ENCODE measurements at regions of chr13 and their contacts with region 1.

Region 1: DNA sequence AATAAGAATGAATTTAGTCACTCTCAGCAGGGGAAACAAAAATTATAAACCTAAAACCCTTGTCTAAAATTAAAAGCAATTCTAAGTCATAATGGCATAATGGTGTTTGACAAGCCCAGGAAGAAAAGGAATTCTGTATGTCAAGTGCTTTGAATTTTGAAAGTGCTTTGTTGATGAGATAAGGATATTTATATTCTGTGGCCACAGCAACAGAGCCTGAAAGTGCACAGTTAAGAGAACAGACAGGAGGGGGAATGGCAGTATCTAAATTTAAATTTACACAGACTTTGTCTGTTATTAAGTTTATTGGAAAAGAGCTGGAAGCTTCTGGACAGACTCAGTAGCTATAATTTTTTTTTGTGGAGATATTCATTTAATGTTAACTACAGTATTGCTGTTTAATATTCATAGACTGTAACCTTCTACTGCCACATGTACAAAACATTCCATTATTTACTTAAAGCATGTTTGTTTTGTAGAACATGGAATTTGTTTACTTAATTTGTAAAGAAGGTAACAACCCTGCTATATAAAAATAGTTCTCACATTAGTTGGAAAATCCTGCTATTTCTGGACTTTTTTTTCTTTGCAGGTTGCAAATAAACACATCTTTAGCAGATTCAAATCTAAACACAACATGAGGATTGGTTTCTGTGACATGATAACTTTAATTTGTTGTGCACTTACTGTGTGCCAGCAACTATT is 70.0 kb downstream of the OLFM4 start:
- DNase-seq: no peak
- ATAC-seq: no peak
- H3K4me3 ChIP-seq: no peak overlapping the region
- H3K4me3 Mint-ChIP-seq: no peak overlapping the region
- H3K27ac ChIP-seq: no peak overlapping the region
- H3K27ac Mint-ChIP-seq: no peak overlapping the region
- H3K4me1 ChIP-seq: no peaks in the 10 kb centered on the region
- H3K4me1 Mint-ChIP-seq: no peaks in the 10 kb centered on the region
- H3K27me3 ChIP-seq: no peaks in the 10 kb centered on the region
- H3K27me3 Mint-ChIP-seq: peaks cover 2% of the 10 kb centered on the region
- CTCF ChIP-seq: no peak

Region 2: DNA sequence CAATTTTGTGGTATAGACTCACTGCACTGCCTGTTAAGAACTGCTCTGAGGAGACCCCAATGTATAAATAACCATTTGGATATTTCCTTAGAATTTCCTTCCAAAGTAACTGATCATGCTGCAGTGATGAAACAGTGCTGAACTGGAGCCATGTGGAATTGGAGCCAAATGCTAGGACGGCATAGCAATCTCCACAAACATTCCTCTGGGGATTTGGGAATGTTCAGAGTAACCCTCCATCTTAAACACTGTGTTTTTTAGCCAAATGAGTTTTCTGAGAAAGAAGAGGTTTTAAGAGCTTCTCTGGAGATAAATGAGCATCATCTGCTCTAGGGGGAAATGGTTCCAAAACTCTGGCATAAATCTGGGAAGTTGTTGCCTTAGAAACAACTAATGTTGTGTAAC is 28.2 kb after region 1 on chr13:
- CTCF ChIA-PET with region 1: no interaction called
- POLR2A ChIA-PET with region 1: no interaction called
- intact Hi-C with region 1: no loop called
- DNase-seq: no peak
- ATAC-seq: no peak
- H3K4me3 ChIP-seq: no peak overlapping the region
- H3K4me3 Mint-ChIP-seq: no peak overlapping the region
- H3K27ac ChIP-seq: no peak overlapping the region
- H3K27ac Mint-ChIP-seq: no peak overlapping the region
- H3K4me1 ChIP-seq: no peaks in the 10 kb centered on the region
- H3K4me1 Mint-ChIP-seq: no peaks in the 10 kb centered on the region
- H3K27me3 ChIP-seq: no peaks in the 10 kb centered on the region
- H3K27me3 Mint-ChIP-seq: peaks cover 2% of the 10 kb centered on the region
- CTCF ChIP-seq: no peak

Region 3: DNA sequence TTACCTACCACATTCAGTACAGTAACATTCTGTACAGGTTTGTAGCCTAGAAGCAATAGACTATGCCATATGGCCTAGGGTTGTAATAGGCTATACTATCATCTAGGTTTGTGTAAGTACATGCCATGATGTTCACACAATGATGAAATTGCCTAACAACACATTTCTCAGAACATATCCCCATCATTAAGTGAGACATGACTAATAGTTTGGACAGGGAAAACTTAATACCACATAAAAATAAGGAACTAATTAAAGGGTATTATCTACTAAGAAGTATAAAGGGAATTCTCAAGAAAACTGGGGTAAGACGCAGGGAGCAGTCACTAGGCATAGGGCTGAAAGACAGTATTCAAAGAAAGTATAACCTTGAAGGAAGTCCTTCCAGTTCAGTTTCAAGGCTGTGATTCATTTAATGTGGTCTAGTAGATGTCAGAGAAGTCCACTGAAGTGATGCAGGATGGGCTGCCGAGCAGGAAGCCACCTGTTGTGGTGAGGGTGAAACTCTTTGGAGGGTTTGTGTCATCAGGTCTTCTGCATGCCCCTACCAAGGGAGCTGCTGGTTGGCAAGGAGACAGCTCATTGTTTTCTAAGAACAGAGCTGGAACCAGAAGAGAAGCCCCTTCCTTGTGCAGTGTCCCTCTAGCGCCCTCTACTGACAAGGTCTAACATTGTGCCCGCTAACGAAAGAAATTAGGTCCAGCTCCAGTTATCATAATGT is 52.9 kb after region 1 on chr13:
- CTCF ChIA-PET with region 1: no interaction called
- POLR2A ChIA-PET with region 1: no interaction called
- intact Hi-C with region 1: loop called in 1 of 2 experiments (anchors 10 kb)
- DNase-seq: peak in 4 of 9 experiments; percentile 16 to 45 (median 24)
- ATAC-seq: peak; percentile 26
- H3K4me3 ChIP-seq: no peak overlapping the region
- H3K4me3 Mint-ChIP-seq: no peak overlapping the region
- H3K27ac ChIP-seq: no peak overlapping the region
- H3K27ac Mint-ChIP-seq: no peak overlapping the region
- H3K4me1 ChIP-seq: no peaks in the 10 kb centered on the region
- H3K4me1 Mint-ChIP-seq: no peaks in the 10 kb centered on the region
- H3K27me3 ChIP-seq: no peaks in the 10 kb centered on the region
- H3K27me3 Mint-ChIP-seq: peaks cover 8% of the 10 kb centered on the region
- CTCF ChIP-seq: no peak

Measured in CD8-positive, alpha-beta T cell (primary cell).